ENCODE measurements at regions of chr2 and their contacts with region 1.

Region 1: DNA sequence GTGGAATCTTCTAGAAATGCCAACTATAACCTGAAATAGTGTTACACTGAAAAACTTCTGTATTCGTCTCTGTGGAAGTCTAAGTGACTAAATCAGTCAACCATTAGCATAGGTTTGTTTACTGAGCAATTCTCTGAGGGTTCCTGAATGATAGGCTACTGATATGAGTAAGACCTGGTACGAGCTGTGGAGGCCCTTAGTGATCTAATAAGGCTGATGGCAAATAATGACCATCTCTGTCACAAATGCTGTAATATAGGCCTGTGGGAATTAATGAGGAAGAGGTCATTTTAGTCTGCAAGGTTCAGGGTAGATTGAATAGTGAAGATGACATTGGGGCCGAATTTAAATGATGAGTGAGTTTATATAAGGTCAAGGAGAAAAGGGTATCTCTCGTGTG is 82.5 kb downstream of the MGAT5 start:
- DNase-seq: no peak
- H3K4me3 ChIP-seq: no peak overlapping the region
- H3K27ac ChIP-seq: peak overlapping the region in 1 of 2 experiments; percentile 100; a peak in 2 of 4 replicates
- H3K4me1 ChIP-seq: peaks cover 0 to 37% of the 10 kb centered on the region in 2 experiments; a peak in 2 of 4 replicates
- H3K27me3 ChIP-seq: no peaks in the 10 kb centered on the region
- CTCF ChIP-seq: no peak
- EP300 ChIP-seq: no peak
- RAD21 ChIP-seq: no peak

Region 2: GRCh38 chr2:134348239-134348638 is 11.9 kb after region 1 on chr2:
- CTCF ChIA-PET with region 1: interaction called, 14 read pairs
- POLR2A ChIA-PET with region 1: interaction called, 3 read pairs
- DNase-seq: no peak
- H3K4me3 ChIP-seq: 0 out of 4 replicates have a peak overlapping the region, but pooled peaks of 1 of the 2 experiments have one; percentile 4
- H3K27ac ChIP-seq: peak overlapping the region; percentile 11 to 92; a peak in 3 of 4 replicates
- H3K4me1 ChIP-seq: peaks cover 9 to 29% of the 10 kb centered on the region in 2 experiments; a peak in 2 of 4 replicates
- H3K27me3 ChIP-seq: no peaks in the 10 kb centered on the region
- CTCF ChIP-seq: no peak
- EP300 ChIP-seq: no peak
- RAD21 ChIP-seq: no peak